ENCODE measurements at regions of chr1 and their contacts with region 1.

Region 1: DNA sequence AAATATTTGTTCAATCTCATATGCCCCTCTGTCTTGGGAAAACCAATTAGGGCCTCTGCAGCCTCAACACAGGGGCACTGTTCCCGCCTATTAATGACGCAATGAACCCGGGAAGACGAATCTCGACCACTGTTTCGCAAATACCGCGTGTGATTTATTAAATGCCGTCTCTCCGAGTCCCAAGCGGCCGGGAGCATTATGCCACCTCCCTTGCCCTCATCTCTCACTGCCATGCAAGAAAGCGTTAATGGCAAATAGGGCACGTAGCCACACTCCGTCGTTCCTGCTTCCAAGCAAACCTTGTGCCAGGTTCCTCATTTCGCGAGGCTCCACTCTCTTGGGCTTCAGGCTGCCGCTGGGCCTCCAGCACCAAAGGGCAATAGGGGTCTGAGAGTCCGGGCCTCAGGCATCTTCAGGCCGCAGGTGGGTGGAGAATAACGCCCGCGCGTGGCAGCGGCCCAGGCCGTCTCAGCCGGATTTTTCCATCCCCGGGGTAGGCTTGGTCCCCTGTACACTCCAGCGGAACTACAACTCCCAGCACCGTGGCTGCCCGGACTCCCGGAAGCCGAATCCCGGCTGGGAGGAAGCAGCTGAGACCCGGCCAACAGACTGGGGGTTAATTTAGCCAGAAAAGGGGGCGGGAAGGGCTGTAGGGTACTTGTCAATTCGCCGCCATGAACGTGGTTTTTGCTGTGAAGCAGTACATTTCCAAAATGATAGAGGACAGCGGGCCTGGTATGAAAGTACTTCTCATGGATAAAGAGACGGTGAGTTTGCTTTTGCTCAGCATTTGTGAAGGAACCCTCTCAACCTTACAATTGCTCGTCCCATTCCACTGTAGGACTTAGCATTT is at the start of gene VPS45:
- DNase-seq: peak; percentile 88
- H3K4me3 ChIP-seq: peak within 1 kb of the TSS; percentile 50 to 55
- H3K27ac ChIP-seq: peak within 1 kb of the TSS; percentile 90 to 91
- H3K4me1 ChIP-seq: no peaks in the 10 kb centered on the region
- H3K27me3 ChIP-seq: no peaks in the 10 kb centered on the region
- CTCF ChIP-seq: peak in 1 of 4 experiments; percentile 21
- POLR2A ChIP-seq: peak; percentile 26
- total RNA-seq, gene VPS45: 29.6 to 33.3 TPM

Region 2: GRCh38 chr1:149927503-149928387 is 139.7 kb before region 1 on chr1 and contains the start of gene SF3B4:
- intact Hi-C with region 1: no loop called
- DNase-seq: peak; percentile 97
- H3K4me3 ChIP-seq: peak within 1 kb of the TSS; percentile 59 to 76
- H3K27ac ChIP-seq: peak within 1 kb of the TSS; percentile 95 to 98
- H3K4me1 ChIP-seq: peaks cover 13% of the 10 kb centered on the region
- H3K27me3 ChIP-seq: no peaks in the 10 kb centered on the region
- CTCF ChIP-seq: peak in 1 of 4 experiments; percentile 37
- POLR2A ChIP-seq: peak; percentile 88
- total RNA-seq, gene SF3B4: 15.0 to 22.1 TPM

Region 3: DNA sequence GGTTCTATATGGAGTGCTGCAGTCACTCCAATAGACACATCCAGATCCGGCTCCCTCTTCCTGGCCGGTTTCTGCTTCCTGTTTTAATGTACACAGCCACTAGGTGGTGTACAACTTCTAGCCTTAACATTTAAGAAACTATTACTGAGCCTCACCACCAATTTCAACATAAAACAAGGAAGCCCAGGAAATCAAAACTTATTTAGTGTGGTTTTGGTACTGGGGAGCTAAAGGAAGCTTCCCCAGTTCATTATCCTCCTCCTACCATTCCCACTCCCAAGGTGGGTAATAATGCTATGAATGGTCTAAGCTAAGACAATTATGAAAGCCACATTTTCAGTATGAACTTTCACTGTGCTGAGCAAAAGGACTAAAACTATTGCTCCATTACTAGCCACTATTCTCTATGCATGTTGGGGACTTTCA is 105.3 kb before region 1 on chr1:
- intact Hi-C with region 1: no loop called
- DNase-seq: peak; percentile 68
- H3K4me3 ChIP-seq: no peak overlapping the region
- H3K27ac ChIP-seq: peak overlapping the region; percentile 10 to 53
- H3K4me1 ChIP-seq: no peaks in the 10 kb centered on the region
- H3K27me3 ChIP-seq: no peaks in the 10 kb centered on the region
- CTCF ChIP-seq: peak; percentile 70 to 89 (median 84)
- POLR2A ChIP-seq: no peak

Region 4: DNA sequence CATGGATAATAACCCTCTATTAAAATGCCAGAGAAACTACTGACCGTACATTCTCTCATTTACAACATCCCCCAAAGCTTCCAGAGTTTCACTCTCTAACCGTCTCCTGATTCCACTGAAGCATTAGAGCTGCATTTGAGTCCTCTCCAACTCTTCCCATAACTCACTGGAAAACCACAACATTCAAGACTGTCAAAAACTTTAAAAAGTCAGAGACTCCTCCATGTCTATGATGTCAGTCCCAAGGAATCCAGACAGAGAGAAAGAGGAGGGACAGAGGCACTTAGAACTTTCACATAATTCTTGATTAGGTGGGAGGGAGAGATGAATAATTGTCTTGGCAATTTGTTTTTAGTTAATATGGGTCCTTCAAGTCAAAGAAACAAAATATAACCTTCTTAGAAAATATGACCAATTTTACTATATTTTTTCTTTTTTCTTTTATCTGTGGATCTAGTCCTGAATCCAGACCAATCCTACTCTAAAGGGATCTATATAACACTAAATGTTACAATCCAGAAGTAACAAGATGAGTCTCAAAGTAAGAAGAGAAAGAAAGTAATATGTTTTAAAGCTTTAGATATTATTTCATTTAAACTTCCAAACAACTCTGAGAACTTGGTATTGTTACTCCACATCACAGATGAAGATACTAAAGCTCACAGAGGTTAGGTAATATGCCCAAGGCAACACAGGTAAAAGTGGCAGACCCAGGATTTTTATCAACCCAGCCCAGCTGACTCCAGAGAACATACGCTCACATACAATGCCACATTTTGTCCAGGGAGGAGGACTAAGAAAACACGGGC is 80.7 kb before region 1 on chr1:
- intact Hi-C with region 1: no loop called
- DNase-seq: no peak
- H3K4me3 ChIP-seq: no peak overlapping the region
- H3K27ac ChIP-seq: no peak overlapping the region
- H3K4me1 ChIP-seq: peaks cover 6% of the 10 kb centered on the region
- H3K27me3 ChIP-seq: no peaks in the 10 kb centered on the region
- CTCF ChIP-seq: no peak
- POLR2A ChIP-seq: no peak

Region 5: GRCh38 chr1:150009665-150010392 is 57.6 kb before region 1 on chr1:
- intact Hi-C with region 1: loop called (anchors 5 kb)
- DNase-seq: peak; percentile 66
- H3K4me3 ChIP-seq: peak overlapping the region; percentile 80 to 88
- H3K27ac ChIP-seq: peak overlapping the region; percentile 96 to 98
- H3K4me1 ChIP-seq: peaks cover 9% of the 10 kb centered on the region
- H3K27me3 ChIP-seq: no peaks in the 10 kb centered on the region
- CTCF ChIP-seq: no peak
- POLR2A ChIP-seq: no peak

Region 6: DNA sequence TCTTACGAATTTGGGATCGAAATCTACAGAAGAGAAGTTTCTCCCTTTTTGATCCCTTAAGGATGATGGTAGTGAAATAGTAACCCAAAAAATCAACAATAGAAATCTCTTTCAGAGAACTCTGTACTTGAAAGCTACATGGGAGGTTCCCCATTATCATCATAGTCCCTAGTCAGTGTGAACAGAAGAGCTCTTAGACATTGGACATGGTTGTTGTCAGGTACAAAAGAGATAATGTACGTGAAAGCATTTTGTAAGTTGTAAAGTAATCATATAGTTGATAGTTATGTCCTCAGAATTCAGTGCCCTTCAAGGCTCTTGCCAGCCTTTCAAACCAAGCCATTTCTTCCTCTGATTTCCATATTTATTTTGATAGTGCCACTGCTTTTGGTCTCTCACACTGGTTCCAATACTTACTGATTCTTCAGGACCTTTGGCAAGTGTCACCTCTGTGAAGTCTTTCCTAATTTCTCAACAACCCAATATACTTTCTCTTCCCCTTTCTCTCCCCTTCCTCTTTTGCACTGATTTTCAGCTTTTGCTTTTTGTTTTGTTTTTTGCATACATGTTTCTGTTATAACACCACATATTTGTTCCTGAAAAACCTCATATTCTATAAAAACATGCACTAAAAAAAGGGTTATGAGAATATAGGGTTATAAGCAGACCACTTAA is 22.6 kb after region 1 on chr1:
- intact Hi-C with region 1: no loop called
- DNase-seq: no peak
- H3K4me3 ChIP-seq: no peak overlapping the region
- H3K27ac ChIP-seq: no peak overlapping the region
- H3K4me1 ChIP-seq: no peaks in the 10 kb centered on the region
- H3K27me3 ChIP-seq: no peaks in the 10 kb centered on the region
- CTCF ChIP-seq: no peak
- POLR2A ChIP-seq: no peak

Region 7: GRCh38 chr1:150149271-150150132 is 82.1 kb after region 1 on chr1 and contains the start of gene PLEKHO1:
- intact Hi-C with region 1: loop called (anchors 5 kb)
- DNase-seq: peak; percentile 73
- H3K4me3 ChIP-seq: peak within 1 kb of the TSS; percentile 66 to 78
- H3K27ac ChIP-seq: peak within 1 kb of the TSS; percentile 84 to 87
- H3K4me1 ChIP-seq: no peaks in the 10 kb centered on the region
- H3K27me3 ChIP-seq: no peaks in the 10 kb centered on the region
- CTCF ChIP-seq: no peak
- POLR2A ChIP-seq: peak; percentile 71
- total RNA-seq, gene PLEKHO1: 33.1 to 75.0 TPM

Measured in prostate gland (tissue), 2 donors.